Activated CD4-positive, alpha-beta memory T cell treated with anti-CD3 and anti-CD28 coated beads for 36 hours (primary cell): ENCODE measurements at regions of chr11 and their contacts with region 1.

Region 1: DNA sequence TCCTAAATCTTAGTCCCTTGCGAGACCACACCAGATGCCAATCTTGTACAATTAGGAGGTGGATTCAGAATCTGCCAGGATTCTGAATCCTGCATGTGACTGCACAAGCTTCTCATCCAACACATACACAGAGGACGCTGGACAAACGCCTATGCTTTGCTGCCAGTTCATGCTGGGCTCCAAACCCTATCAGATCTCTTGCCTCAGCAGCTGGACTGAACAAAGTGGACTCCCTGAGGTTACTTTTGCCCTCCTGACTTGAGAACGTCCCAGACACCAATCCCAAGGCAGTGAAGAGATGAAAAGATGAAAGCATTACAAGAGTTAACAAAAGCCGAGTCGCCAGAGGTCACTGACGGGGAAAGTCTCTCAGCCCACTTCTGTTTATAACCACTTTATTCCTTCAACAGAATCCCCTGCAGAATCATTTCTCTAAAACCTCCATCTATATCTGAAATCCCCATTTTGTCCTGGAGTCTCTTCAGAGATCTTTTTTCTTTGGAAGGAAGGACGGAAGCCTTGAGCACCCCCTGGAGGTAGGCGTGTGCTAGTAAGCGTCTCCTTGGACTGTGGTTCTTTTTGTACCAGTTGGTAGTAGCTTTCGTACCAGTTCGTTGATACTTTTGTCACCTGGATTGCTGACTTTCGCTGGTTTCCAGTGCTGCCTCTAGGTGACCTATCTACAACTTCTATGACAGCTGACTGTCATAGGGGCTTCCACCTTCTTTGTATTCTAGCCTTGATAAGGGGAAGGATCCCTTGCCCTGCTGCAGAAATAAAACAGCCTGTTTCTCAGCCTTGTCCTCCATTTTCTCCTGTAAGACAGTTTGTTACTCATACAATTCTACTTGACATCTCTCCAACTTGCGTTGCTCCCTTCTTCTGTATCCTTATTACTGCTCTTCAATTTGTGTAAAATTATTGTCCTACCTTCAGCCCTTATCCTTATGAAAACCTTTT is 26.1 kb upstream of the EED start:
- DNase-seq: peak; percentile 79
- H3K4me3 Mint-ChIP-seq: peak overlapping the region; percentile 56
- H3K27ac Mint-ChIP-seq: peak overlapping the region; percentile 92
- H3K4me1 Mint-ChIP-seq: peaks cover 76% of the 10 kb centered on the region
- H3K27me3 Mint-ChIP-seq: no peaks in the 10 kb centered on the region

Region 2: DNA sequence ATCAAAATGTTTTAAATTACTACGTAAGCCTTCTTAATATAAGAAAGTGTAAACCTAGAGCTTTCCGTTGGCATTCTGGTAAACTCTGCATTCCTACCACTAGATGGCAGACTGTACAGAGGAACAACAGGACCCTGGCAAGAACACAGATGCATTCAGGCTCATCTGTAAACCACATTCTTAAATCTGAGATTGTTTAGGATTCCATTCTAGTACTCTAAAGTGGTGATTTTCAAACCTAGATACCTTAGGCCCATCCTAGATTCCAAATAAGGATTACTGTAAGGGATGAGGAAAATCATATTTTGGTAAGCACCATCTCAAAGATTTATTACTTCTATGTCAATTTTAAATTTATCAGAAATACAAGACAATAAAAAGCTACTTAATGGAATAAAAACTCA is 176.4 kb before region 1 on chr11:
- CTCF ChIA-PET with region 1: interaction called, 18 read pairs
- POLR2A ChIA-PET with region 1: no interaction called
- intact Hi-C with region 1: loop called (anchors 1 kb)
- DNase-seq: peak; percentile 48
- H3K4me3 Mint-ChIP-seq: no peak overlapping the region
- H3K27ac Mint-ChIP-seq: peak overlapping the region; percentile 58
- H3K4me1 Mint-ChIP-seq: peaks cover 71% of the 10 kb centered on the region
- H3K27me3 Mint-ChIP-seq: no peaks in the 10 kb centered on the region

Region 3: DNA sequence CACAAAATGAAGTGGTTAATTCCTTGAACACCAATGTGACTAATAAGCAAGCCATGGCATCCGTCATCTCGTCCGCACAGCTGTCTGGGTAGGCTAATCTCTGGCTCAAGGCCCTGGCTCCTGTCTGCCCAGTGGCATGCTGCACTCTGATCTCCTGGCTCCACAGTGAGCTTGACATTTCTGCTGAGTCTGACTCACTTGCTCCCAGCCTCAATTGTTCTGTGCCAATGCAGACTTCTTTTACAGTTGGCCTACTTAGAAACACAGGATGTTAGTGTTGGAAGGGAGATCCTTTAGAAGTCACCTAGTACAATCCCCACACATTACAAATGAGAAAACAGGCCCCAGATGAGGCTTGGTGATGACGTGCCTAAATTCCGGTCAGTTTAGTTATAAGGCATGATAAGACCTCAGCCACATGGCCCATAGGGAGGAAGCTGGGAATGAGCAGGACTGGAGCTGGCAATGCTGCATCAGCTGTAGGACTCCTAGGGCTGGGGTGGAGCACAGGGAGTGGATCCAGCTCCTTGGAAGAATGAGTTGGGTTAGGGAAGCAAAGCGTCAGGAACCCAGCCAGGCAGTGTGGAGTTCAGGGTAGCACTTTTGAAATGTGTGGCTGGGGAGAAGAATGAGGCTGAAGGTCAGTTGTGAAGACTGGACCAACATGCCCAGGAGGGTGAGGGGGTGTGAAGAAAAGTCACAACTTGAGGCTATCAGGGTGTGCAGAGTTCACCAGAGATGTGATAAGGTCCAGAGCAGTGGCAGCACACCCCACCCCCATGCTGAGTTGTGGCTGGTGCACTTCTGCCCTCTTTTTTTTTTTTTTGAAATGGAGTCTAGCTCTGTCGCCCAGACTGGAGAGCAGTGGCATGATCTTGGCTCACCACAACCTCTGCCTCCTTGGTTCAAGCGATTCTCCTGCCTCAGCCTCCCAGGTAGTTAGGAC is 44.0 kb before region 1 on chr11:
- CTCF ChIA-PET with region 1: no interaction called
- POLR2A ChIA-PET with region 1: interaction called, 4 read pairs
- intact Hi-C with region 1: loop called (anchors 1 kb)
- DNase-seq: peak; percentile 36
- H3K4me3 Mint-ChIP-seq: no peak overlapping the region
- H3K27ac Mint-ChIP-seq: no peak overlapping the region
- H3K4me1 Mint-ChIP-seq: peaks cover 28% of the 10 kb centered on the region
- H3K27me3 Mint-ChIP-seq: no peaks in the 10 kb centered on the region

Region 4: DNA sequence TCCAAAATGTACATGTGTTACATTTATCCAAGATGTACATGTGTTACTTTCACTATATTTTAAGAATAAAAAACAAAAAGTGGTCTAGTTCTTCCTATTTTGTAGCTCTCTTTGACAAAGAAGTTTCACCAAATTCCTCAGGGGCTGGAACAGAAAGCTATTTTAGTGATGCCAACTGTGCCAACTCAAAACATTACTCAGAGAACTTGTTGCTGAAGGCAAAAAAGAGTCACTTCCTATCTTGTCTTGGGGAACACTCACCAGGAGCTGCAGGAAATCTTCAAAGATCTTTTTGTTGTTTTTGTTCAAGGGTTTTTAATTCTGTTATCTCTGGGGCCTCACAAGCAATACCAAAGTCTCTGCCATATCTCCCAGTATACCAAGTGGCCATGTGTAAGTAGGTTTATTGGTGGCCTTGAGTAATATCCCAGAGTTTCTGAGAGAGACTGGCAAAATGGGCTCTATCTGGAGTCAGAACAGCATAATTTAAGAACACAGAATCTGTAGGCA is 12.6 kb after region 1 on chr11:
- CTCF ChIA-PET with region 1: interaction called, 13 read pairs
- POLR2A ChIA-PET with region 1: interaction called, 14 read pairs
- intact Hi-C with region 1: loop called (anchors 1 kb)
- DNase-seq: no peak
- H3K4me3 Mint-ChIP-seq: no peak overlapping the region
- H3K27ac Mint-ChIP-seq: peak overlapping the region; percentile 77
- H3K4me1 Mint-ChIP-seq: peaks cover 66% of the 10 kb centered on the region
- H3K27me3 Mint-ChIP-seq: no peaks in the 10 kb centered on the region

Region 5: GRCh38 chr11:86259730-86260129 is 41.3 kb after region 1 on chr11:
- CTCF ChIA-PET with region 1: no interaction called
- POLR2A ChIA-PET with region 1: no interaction called
- intact Hi-C with region 1: no loop called
- DNase-seq: no peak
- H3K4me3 Mint-ChIP-seq: no peak overlapping the region
- H3K27ac Mint-ChIP-seq: no peak overlapping the region
- H3K4me1 Mint-ChIP-seq: peaks cover 46% of the 10 kb centered on the region
- H3K27me3 Mint-ChIP-seq: no peaks in the 10 kb centered on the region

Region 6: GRCh38 chr11:86592659-86593451 is 374.4 kb after region 1 on chr11:
- CTCF ChIA-PET with region 1: no interaction called
- POLR2A ChIA-PET with region 1: no interaction called
- intact Hi-C with region 1: loop called (anchors 5 kb)
- DNase-seq: peak; percentile 94
- H3K4me3 Mint-ChIP-seq: no peak overlapping the region
- H3K27ac Mint-ChIP-seq: peak overlapping the region; percentile 66
- H3K4me1 Mint-ChIP-seq: peaks cover 51% of the 10 kb centered on the region
- H3K27me3 Mint-ChIP-seq: peaks cover 4% of the 10 kb centered on the region